ENCODE measurements at regions of chr1 and their contacts with region 1.

Region 1: DNA sequence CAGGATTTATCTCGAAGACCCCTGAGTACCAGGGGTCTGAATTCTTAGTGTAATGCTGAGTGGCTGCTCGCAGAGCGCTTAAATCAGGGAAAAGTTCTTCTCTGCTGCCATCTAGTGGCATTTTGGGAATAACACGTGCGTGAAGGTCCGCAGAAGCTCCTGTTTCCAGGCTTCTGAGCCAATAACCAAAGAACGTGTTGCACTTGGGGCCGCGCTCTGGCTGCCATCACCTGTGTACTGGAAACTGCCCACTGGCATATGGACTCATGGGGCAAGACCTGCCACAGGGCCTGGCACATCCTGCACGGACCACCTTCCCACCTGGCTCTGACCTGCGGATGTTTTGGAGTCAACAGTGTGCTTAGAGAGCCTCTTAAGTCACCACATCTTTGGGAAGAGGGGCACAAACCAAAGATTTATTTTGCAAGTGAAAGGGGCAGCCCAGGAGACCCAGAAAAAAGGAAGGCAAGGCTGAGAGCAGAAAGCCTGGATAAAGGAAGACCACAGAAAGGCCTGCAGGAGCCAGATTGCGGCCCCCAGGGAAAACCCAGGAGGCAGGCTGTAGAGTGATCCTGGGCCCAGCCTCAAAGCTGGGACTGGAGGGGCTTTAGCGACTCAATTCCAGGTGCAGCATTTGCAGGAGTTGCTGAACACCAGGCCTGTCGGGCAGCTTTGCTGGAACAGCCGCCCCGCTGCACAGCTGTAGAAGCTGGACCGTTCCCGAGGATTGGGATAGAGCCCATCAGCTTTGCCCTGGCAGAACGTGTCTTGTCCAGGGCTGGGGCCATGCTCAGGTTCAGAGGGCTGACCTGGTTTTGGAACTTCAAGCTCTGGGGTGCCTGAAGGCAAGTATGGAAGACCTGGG is 13.0 kb downstream of the CHIT1 start:
- DNase-seq: peak; percentile 17
- ATAC-seq: peak; percentile 92
- H3K4me3 ChIP-seq: no peak overlapping the region
- H3K27ac ChIP-seq: no peak overlapping the region
- H3K4me1 ChIP-seq: no peaks in the 10 kb centered on the region
- H3K27me3 ChIP-seq: peaks cover 0 to 5% of the 10 kb centered on the region in 2 experiments; a peak in 1 of 4 replicates
- CTCF ChIP-seq: peak; percentile 63 to 90 (median 64); a peak in 5 of 6 replicates
- EP300 ChIP-seq: no peak
- POLR2A ChIP-seq: no peak
- RAD21 ChIP-seq: peak; percentile 78

Region 2: GRCh38 chr1:203038891-203039608 is 177.5 kb before region 1 on chr1:
- CTCF ChIA-PET with region 1: interaction called, 105 read pairs
- POLR2A ChIA-PET with region 1: no interaction called
- RAD21 ChIA-PET with region 1: interaction called, 46 read pairs
- SMC1A ChIA-PET with region 1: interaction called, 41 read pairs
- in situ Hi-C with region 1: loop called (anchors 5 kb)
- intact Hi-C with region 1: loop called (anchors 1 kb)
- DNase-seq: no peak
- ATAC-seq: peak; percentile 91
- H3K4me3 ChIP-seq: no peak overlapping the region
- H3K27ac ChIP-seq: no peak overlapping the region
- H3K4me1 ChIP-seq: peaks cover 11% of the 10 kb centered on the region
- H3K27me3 ChIP-seq: no peaks in the 10 kb centered on the region
- CTCF ChIP-seq: peak; percentile 88 to 91 (median 89)
- EP300 ChIP-seq: no peak
- POLR2A ChIP-seq: no peak
- RAD21 ChIP-seq: peak; percentile 79

Region 3: GRCh38 chr1:203117611-203118575 is 98.6 kb before region 1 on chr1:
- CTCF ChIA-PET with region 1: interaction called, 91 read pairs
- POLR2A ChIA-PET with region 1: no interaction called
- RAD21 ChIA-PET with region 1: interaction called, 31 read pairs
- SMC1A ChIA-PET with region 1: interaction called, 36 read pairs
- in situ Hi-C with region 1: no loop called
- intact Hi-C with region 1: loop called (anchors 2 kb)
- DNase-seq: no peak
- ATAC-seq: peak; percentile 96
- H3K4me3 ChIP-seq: no peak overlapping the region
- H3K27ac ChIP-seq: no peak overlapping the region
- H3K4me1 ChIP-seq: no peaks in the 10 kb centered on the region
- H3K27me3 ChIP-seq: peaks cover 6 to 9% of the 10 kb centered on the region in 2 experiments; a peak in 3 of 4 replicates
- CTCF ChIP-seq: peak; percentile 28 to 72 (median 64)
- EP300 ChIP-seq: no peak
- POLR2A ChIP-seq: no peak
- RAD21 ChIP-seq: peak; percentile 47

Region 4: DNA sequence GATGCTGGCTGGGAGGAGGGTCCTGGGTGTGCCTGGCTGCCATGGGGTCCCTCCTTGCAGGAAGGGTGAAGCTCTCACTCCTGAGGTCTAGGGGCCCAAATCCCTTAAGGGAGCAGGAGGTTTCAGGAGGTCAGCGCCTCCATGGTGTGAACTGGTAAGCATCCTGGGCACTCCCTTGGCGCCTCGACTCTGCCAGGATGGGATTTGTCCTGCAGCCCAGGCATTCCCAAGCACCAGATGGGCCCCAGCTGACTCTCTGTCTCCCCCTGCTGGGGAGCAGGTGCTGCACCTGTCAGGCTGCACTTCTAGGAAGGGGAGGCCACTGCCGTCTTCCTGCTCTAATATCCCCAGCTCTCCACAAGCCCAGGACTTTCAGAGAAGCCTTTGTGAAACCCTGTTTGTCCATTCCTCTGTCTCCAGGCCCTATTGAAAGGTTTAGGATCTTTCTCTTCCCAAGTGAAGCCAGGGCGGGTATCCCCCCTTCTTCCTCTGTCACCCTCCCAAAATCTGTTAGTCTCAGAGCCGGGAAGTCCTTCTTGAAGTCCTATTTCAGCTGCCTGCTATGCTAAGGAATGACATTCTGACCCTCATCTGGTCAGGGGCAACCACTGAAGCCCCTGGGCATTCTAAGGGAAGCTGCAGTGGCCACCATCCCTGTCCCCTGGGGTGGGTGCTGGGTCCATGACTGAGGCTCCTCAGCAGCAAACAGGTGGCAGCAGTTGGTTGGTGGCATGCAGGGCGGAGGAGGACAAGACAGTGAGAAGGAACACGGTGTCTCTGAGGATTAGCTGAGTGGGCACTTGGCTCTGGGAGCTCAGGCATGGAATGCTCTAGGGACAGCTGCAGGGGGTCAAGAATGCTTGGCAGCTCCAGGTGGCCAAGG is 44.1 kb before region 1 on chr1:
- CTCF ChIA-PET with region 1: interaction called, 114 read pairs
- POLR2A ChIA-PET with region 1: no interaction called
- RAD21 ChIA-PET with region 1: interaction called, 61 read pairs
- SMC1A ChIA-PET with region 1: interaction called, 28 read pairs
- in situ Hi-C with region 1: no loop called
- intact Hi-C with region 1: loop called (anchors 2 kb)
- DNase-seq: no peak
- ATAC-seq: peak; percentile 65
- H3K4me3 ChIP-seq: no peak overlapping the region
- H3K27ac ChIP-seq: no peak overlapping the region
- H3K4me1 ChIP-seq: peaks cover 4% of the 10 kb centered on the region; the same call in 1 of the 2 replicates
- H3K27me3 ChIP-seq: no peaks in the 10 kb centered on the region; a peak in 2 of 4 replicates
- CTCF ChIP-seq: peak; percentile 69 to 96 (median 90)
- EP300 ChIP-seq: no peak
- POLR2A ChIP-seq: no peak
- RAD21 ChIP-seq: peak; percentile 54

Region 5: GRCh38 chr1:203199816-203200571 is 16.5 kb before region 1 on chr1:
- CTCF ChIA-PET with region 1: interaction called, 13 read pairs
- POLR2A ChIA-PET with region 1: no interaction called
- RAD21 ChIA-PET with region 1: interaction called, 3 read pairs
- SMC1A ChIA-PET with region 1: interaction called, 3 read pairs
- in situ Hi-C with region 1: no loop called
- intact Hi-C with region 1: no loop called
- DNase-seq: no peak
- ATAC-seq: no peak
- H3K4me3 ChIP-seq: no peak overlapping the region
- H3K27ac ChIP-seq: no peak overlapping the region
- H3K4me1 ChIP-seq: no peaks in the 10 kb centered on the region
- H3K27me3 ChIP-seq: peaks cover 0 to 5% of the 10 kb centered on the region in 2 experiments; a peak in 3 of 4 replicates
- CTCF ChIP-seq: no peak
- EP300 ChIP-seq: no peak
- POLR2A ChIP-seq: no peak
- RAD21 ChIP-seq: no peak

Measured in GM12878 (cell line).